ENCODE measurements at regions of chr1 and their contacts with region 1.

Region 1: GRCh38 chr1:16960560-16961296 is 19.7 kb downstream of the MFAP2 start:
- DNase-seq: peak; percentile 53
- H3K27ac ChIP-seq: peak overlapping the region; percentile 73
- CTCF ChIP-seq: peak; percentile 90

Region 2: GRCh38 chr1:16946646-16947045 is 14.1 kb before region 1 on chr1:
- CTCF ChIA-PET with region 1: interaction called, 13 read pairs
- POLR2A ChIA-PET with region 1: no interaction called
- DNase-seq: no peak
- H3K27ac ChIP-seq: peak overlapping the region; percentile 98
- CTCF ChIP-seq: no peak

Region 3: GRCh38 chr1:17011439-17012307 is 50.9 kb after region 1 on chr1 and contains the start of gene ATP13A2:
- CTCF ChIA-PET with region 1: no interaction called
- POLR2A ChIA-PET with region 1: no interaction called
- DNase-seq: peak; percentile 83
- H3K27ac ChIP-seq: peak within 1 kb of the TSS; percentile 69
- CTCF ChIP-seq: no peak

Region 4: GRCh38 chr1:17045634-17046333 is 85.1 kb after region 1 on chr1:
- CTCF ChIA-PET with region 1: interaction called, 11 read pairs
- POLR2A ChIA-PET with region 1: no interaction called
- DNase-seq: peak; percentile 65
- H3K27ac ChIP-seq: no peak overlapping the region
- CTCF ChIP-seq: peak; percentile 84

Measured in RWPE1 (cell line).